Activated naive CD4-positive, alpha-beta T cell treated with anti-CD3 and anti-CD28 coated beads for 36 hours (primary cell): ENCODE measurements at regions of chrX and their contacts with region 1.

Region 1: DNA sequence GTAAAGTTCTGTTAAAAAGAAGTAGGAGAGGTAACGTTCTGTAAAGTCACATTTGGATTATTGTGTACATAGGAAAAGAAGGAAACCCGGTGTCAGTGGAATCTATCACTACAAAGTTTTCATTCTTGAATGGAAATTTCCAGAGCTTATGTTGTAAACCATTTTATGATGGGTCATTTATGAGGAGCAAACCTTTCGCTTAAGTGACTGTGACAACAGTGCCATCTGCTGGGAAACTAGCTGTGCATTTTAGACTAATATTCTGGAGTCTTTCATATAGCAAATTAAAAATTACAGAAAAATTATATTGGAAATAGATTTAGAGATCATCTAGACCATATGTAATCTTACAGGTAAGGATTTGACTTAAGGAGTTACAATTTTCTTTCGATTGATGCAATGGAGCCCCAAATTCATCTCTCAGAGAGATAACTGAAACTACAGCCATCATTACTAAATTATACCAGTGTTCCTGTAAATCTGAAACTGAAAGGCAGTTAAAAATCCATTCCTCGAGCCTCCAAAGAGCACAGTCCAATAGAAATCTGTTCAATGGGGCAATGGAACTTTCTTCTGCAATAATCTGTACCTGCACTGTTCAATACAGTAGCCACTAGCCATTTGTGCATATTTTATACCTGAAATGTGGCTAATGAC is 26.9 kb downstream of the ASB9 start:
- DNase-seq: peak; percentile 61
- H3K4me3 Mint-ChIP-seq: no peak overlapping the region
- H3K27ac Mint-ChIP-seq: no peak overlapping the region
- H3K4me1 Mint-ChIP-seq: no peaks in the 10 kb centered on the region
- H3K27me3 Mint-ChIP-seq: no peaks in the 10 kb centered on the region

Region 2: DNA sequence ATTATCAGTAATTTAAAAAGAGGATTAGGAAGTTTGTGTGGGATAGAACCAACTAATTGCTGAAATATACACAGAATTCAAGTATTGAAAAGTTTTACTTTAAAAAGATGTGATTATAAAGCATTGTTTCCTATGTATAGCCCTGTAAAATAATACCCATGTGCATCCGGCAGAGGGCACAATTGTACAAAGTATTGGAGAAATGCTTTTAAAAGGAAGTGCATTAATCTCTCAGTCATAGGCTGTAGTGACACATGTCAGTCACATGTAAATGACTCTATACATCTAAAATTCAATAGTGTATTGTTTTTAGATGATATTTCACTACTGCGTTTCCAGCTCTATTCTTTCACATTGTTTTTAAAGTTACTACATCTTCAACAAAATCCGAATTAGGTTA is 1203.7 kb before region 1 on chrX:
- CTCF ChIA-PET with region 1: no interaction called
- intact Hi-C with region 1: loop called (anchors 1 kb)
- DNase-seq: peak; percentile 72
- H3K4me3 Mint-ChIP-seq: no peak overlapping the region
- H3K27ac Mint-ChIP-seq: no peak overlapping the region
- H3K4me1 Mint-ChIP-seq: peaks cover 4% of the 10 kb centered on the region
- H3K27me3 Mint-ChIP-seq: no peaks in the 10 kb centered on the region

Region 3: DNA sequence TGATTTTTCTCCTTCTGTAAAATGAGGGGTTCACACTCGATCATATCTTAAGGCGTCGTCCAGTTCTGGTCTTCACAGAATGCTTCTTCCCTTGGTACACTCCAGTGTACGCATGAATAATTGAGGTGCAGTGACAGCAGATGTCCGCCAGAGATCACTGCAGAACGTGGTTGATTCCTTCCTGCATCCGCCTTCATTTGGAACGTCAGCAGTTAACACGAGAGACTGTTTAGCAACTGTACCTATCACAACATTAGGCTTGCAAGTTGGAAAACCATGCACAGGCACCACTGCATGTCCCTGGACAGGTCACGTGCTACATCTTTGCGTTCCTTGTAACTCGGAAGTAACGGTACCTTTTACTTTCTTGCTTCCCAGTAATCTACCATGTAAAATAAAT is 1147.3 kb before region 1 on chrX:
- CTCF ChIA-PET with region 1: no interaction called
- intact Hi-C with region 1: loop called (anchors 1 kb)
- DNase-seq: peak; percentile 56
- H3K4me3 Mint-ChIP-seq: no peak overlapping the region
- H3K27ac Mint-ChIP-seq: no peak overlapping the region
- H3K4me1 Mint-ChIP-seq: peaks cover 2% of the 10 kb centered on the region
- H3K27me3 Mint-ChIP-seq: no peaks in the 10 kb centered on the region

Region 4: GRCh38 chrX:14528629-14529289 is 714.3 kb before region 1 on chrX:
- CTCF ChIA-PET with region 1: no interaction called
- intact Hi-C with region 1: loop called (anchors 5 kb)
- DNase-seq: peak; percentile 77
- H3K4me3 Mint-ChIP-seq: no peak overlapping the region
- H3K27ac Mint-ChIP-seq: no peak overlapping the region
- H3K4me1 Mint-ChIP-seq: peaks cover 2% of the 10 kb centered on the region
- H3K27me3 Mint-ChIP-seq: peaks cover 2% of the 10 kb centered on the region

Region 5: DNA sequence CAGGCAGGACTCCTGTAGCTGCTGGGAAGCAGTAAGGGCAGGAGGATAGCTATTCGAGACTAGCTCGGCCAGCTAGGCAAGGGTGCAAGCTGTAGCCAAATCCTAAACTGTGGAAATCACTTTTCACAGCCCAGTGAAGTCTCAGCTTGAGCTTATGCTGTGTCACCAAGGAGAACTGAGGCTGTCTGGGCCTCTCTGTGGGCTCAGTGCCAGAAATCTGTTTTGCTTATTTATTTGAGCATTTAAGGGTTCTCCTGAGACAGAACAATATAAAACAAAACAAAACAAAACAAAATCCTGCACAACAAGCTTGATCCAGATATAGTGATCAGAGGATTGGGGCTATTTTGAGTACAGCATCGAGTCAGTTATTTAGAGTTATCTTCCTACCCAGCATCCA is 467.6 kb before region 1 on chrX:
- CTCF ChIA-PET with region 1: no interaction called
- intact Hi-C with region 1: no loop called
- DNase-seq: no peak
- H3K4me3 Mint-ChIP-seq: no peak overlapping the region
- H3K27ac Mint-ChIP-seq: no peak overlapping the region
- H3K4me1 Mint-ChIP-seq: peaks cover 2% of the 10 kb centered on the region
- H3K27me3 Mint-ChIP-seq: peaks cover 2% of the 10 kb centered on the region

Region 6: DNA sequence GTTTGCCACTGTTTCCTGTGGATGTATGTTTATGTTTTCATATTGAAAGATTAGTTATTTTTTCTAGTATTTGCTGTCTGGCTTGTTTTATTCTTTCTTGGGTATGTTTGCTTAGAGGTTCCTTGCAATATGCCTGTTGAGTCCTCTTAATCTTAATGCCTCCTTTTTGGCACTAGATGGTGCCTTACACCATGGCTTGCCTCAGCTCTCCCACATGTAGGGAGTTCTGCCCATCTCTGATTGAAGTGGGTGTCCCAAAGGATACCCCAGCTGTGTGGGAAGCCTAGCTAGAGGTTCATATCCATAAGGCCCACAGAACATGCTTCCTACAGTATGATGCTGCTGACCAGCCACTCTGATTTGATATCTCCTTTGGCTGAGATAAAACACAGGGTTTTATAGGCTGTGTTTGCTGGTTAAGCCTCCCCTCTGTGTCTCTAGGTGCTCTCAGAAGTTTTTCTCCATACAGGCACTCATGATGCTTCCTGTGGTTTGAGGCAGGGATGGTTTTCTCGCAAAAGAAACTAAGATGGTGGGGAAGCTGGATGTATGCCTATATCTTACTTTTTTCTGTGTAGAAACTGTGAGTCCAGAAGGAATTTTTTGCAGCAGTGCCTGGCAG is 135.5 kb before region 1 on chrX:
- CTCF ChIA-PET with region 1: interaction called, 4 read pairs
- intact Hi-C with region 1: loop called (anchors 1 kb)
- DNase-seq: peak; percentile 6
- H3K4me3 Mint-ChIP-seq: no peak overlapping the region
- H3K27ac Mint-ChIP-seq: no peak overlapping the region
- H3K4me1 Mint-ChIP-seq: peaks cover 6% of the 10 kb centered on the region
- H3K27me3 Mint-ChIP-seq: no peaks in the 10 kb centered on the region